WTC11 (cell line): ENCODE measurements at regions of chr9 and their contacts with region 1.

Region 1: GRCh38 chr9:91884696-91885687 is 65.0 kb downstream of the ROR2 start:
- DNase-seq: no peak
- ATAC-seq: peak; percentile 57
- H3K4me3 Mint-ChIP-seq: no peak overlapping the region
- H3K27ac Mint-ChIP-seq: peak overlapping the region; percentile 84
- H3K4me1 Mint-ChIP-seq: peaks cover 58% of the 10 kb centered on the region
- H3K27me3 Mint-ChIP-seq: peaks cover 14% of the 10 kb centered on the region
- CTCF ChIP-seq: no peak

Region 2: DNA sequence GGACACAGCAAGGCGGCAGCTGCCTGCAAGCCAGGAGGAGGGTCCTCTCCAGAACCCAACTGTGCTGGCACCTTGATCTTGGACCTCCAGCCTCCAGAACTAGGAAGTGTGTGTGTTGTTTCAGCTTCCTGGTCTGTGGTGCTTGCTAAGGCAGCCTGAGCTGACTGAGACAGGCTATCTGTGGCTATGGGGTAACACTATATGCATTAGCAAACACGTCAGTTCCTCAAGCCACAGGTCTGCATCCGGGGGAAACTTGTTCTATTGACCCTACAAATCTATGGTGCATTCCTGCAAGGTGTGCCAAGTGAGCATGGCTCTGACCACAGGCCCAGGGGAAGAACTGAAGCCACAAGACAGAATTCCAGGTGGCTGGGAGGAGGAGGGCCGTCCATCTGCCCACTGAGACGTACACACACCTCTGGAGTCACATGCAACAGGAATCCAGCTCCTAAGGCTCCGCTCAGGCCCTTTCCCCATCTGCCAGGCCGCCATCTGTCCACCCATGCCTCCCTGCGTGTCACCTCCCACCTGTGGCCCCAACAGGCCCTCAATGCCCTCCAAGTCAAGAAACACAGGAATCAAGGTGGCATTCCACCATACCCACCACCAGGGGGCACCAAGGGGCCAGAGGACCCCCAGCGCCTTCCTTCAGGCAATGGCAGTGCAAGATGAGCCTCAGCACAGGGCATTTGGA is 109.8 kb before region 1 on chr9:
- CTCF ChIA-PET with region 1: interaction called, 11 read pairs
- POLR2A ChIA-PET with region 1: no interaction called
- DNase-seq: peak; percentile 84
- ATAC-seq: peak; percentile 89
- H3K4me3 Mint-ChIP-seq: no peak overlapping the region
- H3K27ac Mint-ChIP-seq: no peak overlapping the region
- H3K4me1 Mint-ChIP-seq: peaks cover 42% of the 10 kb centered on the region
- H3K27me3 Mint-ChIP-seq: no peaks in the 10 kb centered on the region
- CTCF ChIP-seq: peak; percentile 97

Region 3: DNA sequence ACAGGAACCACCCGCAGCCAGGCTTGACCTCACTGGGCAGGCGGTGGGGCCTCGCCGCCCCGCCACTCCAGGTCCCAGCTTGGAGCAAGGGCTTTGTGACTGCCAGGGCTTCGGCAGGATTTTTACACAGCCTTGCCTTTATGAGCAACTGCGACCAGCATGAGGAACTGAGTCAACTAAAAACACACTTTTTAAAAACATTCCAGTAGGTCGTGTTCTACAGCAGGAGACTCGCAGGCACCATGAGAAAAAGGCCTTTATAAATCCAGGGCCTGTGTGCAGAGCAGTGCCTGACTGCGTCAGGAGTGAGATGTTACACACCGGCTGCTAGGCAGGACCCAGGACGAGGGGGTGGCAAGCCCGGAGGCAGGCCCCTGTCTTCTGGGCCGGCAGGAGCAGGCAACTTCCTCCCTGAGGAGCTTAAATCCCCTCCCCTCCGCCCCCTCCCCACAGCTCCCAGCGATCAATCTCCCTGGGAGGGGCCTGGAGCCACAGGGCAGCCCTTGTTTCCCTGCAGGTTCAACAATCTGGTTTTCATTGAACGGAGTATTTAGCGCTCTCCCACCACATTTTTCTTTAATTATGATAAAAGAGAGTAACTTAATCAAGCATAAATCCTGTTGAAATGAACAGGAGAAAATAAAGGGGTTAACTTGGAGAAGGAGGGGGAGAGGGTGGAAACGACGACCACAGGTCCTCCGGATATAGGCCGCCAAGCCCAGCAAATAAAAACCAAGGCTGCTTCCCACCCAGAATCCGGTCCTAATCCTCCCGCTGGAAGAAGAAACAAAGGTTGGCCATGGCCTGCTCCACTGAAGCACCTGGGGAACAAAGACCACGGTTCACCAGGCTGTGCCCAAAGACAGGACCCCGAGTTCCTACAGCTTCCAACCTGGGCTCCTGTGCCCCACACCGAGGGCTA is 27.4 kb before region 1 on chr9:
- CTCF ChIA-PET with region 1: no interaction called
- POLR2A ChIA-PET with region 1: interaction called, 11 read pairs
- DNase-seq: peak; percentile 47
- ATAC-seq: peak; percentile 74
- H3K4me3 Mint-ChIP-seq: no peak overlapping the region
- H3K27ac Mint-ChIP-seq: peak overlapping the region; percentile 81
- H3K4me1 Mint-ChIP-seq: peaks cover 52% of the 10 kb centered on the region
- H3K27me3 Mint-ChIP-seq: no peaks in the 10 kb centered on the region
- CTCF ChIP-seq: no peak